ENCODE measurements at regions of chr2 and their contacts with region 1.

Region 1: GRCh38 chr2:64750817-64751285 is 97.1 kb upstream of the SERTAD2 start:
- DNase-seq: peak; percentile 98
- H3K4me3 Mint-ChIP-seq: peak overlapping the region; percentile 87
- H3K27ac Mint-ChIP-seq: peak overlapping the region; percentile 96
- H3K4me1 Mint-ChIP-seq: peaks cover 29% of the 10 kb centered on the region
- H3K27me3 Mint-ChIP-seq: no peaks in the 10 kb centered on the region

Region 2: GRCh38 chr2:64644177-64645004 is 106.5 kb before region 1 on chr2:
- intact Hi-C with region 1: loop called (anchors 1 kb)
- DNase-seq: peak; percentile 53
- H3K4me3 Mint-ChIP-seq: peak overlapping the region; percentile 87
- H3K27ac Mint-ChIP-seq: peak overlapping the region; percentile 92
- H3K4me1 Mint-ChIP-seq: peaks cover 72% of the 10 kb centered on the region
- H3K27me3 Mint-ChIP-seq: no peaks in the 10 kb centered on the region

Region 3: GRCh38 chr2:64679673-64680425 is 71.0 kb before region 1 on chr2:
- intact Hi-C with region 1: loop called (anchors 1 kb)
- DNase-seq: no peak
- H3K4me3 Mint-ChIP-seq: peak overlapping the region; percentile 61
- H3K27ac Mint-ChIP-seq: peak overlapping the region; percentile 93
- H3K4me1 Mint-ChIP-seq: peaks cover 59% of the 10 kb centered on the region
- H3K27me3 Mint-ChIP-seq: no peaks in the 10 kb centered on the region

Region 4: DNA sequence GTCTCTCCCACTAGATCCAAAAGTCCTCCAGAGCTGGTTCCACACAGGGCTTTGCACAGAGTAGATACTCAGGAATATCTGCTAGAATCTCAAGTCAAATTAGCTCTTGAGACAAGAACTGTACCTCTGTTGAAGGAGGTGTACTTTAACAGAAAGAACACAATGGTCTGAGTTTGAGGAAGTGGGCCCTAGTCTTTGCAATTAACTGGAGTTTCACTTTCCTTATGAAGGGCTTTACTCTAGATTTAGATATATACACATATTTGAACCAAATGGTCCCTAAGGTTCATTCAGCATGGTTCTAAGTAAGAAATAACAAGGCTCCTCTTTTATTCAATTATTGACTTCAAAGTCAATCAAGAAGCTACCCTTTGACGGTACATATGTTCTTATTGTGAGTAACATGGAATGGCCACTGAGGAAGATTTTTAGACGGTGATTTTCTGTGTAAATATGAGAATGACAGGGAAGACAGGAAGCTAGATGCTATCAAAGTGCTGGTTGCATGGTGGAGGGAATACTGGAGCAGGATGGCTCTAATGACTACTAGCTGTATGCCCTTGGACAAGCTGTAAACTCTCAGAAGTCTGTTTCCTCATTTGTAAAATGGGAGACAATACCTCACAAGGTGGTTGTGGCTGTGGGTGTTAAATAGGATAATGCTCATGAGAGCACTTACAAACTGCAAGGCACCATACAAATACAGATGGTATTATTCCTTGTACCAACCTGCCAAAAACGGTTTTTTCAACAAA is 23.7 kb before region 1 on chr2:
- intact Hi-C with region 1: no loop called
- DNase-seq: no peak
- H3K4me3 Mint-ChIP-seq: peak overlapping the region; percentile 46
- H3K27ac Mint-ChIP-seq: peak overlapping the region; percentile 89
- H3K4me1 Mint-ChIP-seq: peaks cover 61% of the 10 kb centered on the region
- H3K27me3 Mint-ChIP-seq: no peaks in the 10 kb centered on the region

Region 5: DNA sequence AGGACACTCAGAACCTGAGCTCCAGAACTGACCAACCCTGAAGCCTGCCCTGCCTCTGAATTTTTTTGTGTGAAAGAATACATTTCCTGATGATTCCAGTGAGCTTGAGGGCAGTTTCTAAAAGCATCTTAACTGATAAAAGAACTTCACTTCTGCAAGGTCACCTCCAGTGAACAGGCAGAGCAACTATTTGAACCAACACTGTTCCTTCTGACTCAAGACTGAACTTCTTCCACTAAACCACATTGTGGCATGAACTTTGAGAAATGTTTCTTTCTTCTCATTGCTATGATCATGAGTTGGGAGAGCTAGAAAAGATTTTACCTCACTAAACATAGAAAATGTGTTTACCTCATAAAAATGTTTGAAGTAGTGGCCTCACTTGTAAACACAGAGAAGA is 13.3 kb before region 1 on chr2:
- intact Hi-C with region 1: loop called (anchors 1 kb)
- DNase-seq: no peak
- H3K4me3 Mint-ChIP-seq: peak overlapping the region; percentile 28
- H3K27ac Mint-ChIP-seq: peak overlapping the region; percentile 79
- H3K4me1 Mint-ChIP-seq: peaks cover 45% of the 10 kb centered on the region
- H3K27me3 Mint-ChIP-seq: no peaks in the 10 kb centered on the region

Region 6: DNA sequence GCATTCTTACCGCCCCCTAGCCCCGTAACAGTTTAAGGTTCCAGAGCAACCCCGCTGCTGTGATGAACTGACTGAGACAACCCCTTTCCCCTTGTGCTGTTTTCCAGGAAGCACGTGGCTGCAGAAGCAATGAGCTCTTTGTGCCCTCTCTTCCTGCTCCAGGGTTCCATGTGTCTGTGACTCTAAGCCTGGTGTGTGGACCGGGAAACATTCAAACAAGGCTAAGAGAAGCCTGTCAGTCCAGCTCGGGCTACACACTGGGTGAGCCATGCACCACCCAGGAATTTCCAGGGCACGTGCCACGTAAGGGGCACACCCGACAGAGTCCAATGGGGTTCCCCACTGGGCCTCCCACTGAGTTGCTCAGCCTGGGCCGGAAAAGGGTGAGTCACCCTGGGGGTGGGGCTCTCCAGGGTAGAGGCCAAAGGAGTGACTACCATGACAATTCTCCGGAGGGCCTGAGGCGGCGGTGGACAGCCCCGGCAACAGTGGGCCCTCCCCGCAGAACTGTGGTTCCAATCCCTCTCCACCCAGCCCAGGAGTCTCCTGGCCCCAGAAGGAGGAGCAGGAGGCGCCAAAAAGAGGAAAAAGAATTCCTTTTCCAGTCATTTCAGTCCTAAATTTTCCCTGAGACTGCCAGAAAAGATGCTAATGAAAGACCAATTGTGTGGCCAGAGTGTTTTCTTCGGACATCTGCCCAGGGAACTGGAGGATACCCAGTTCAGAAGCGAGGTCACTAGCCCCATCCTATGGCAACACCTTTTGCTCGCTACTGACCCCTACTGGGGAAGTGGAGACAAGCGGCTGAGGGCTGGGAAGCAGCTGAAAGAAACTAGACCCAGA is 80.5 kb after region 1 on chr2:
- intact Hi-C with region 1: loop called (anchors 1 kb)
- DNase-seq: peak; percentile 69
- H3K4me3 Mint-ChIP-seq: peak overlapping the region; percentile 15
- H3K27ac Mint-ChIP-seq: peak overlapping the region; percentile 81
- H3K4me1 Mint-ChIP-seq: peaks cover 24% of the 10 kb centered on the region
- H3K27me3 Mint-ChIP-seq: peaks cover 8% of the 10 kb centered on the region

Region 7: DNA sequence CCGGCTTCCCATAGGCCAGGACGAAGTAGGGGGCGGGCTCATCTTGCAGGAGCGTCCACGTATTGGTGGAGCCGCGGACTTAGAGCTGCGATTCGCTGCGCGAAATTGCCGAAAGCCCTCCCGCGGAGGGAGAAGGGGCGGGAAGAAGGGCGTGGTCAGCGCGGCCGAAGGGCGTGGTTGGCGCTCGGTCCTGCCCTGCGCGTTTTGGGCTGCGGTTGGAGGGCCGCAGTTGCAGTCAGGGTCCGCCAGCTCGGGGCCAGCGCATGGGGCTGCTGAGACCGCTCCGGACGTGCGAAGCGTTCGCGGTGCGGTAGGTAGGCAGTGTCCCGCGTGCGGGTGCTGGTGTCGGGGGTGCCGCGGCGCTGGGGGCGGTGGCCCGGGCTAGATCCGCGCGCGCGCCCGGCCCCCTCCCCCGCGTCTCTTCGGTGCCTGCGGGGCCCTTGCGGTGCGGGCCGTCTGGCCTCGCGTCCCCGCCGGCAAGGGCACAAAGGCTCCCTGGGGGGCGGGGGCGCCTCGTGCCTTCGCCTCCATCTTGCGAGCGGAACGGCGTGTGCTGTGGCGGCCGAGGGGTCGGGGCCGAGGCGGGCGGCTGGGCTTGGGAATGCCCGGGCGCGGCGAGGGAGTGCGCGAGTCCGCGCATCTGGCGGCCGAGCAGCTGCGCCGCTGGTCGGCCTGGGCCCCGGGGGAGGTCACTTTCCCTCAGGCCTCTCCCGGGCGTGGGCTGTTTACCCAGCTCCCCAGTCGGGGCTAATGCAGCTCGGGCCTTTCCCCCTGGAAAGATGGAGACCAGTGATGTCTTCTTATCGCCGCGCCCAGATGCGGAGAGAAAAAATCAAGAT is 305.6 kb after region 1 on chr2 and contains the start of gene CEP68:
- intact Hi-C with region 1: loop called (anchors 5 kb)
- DNase-seq: peak; percentile 96
- H3K4me3 Mint-ChIP-seq: peak within 1 kb of the TSS; percentile 92
- H3K27ac Mint-ChIP-seq: peak within 1 kb of the TSS; percentile 73
- H3K4me1 Mint-ChIP-seq: peaks cover 52% of the 10 kb centered on the region
- H3K27me3 Mint-ChIP-seq: no peaks in the 10 kb centered on the region
- total RNA-seq, gene CEP68: 5.9 and 6.1 TPM in 2 replicates

Measured in activated T-helper 2 cell treated with anti-CD3 and anti-CD28 coated beads, Interferon-gamma antibody, Interleukin-2, Interleukin-4, amounts not matched to agents 10 μg/mL and 5 μg/mL and 100 μg/mL, durations not matched to agents 14 hours and 24 hours and 36 hours (primary cell).